ENCODE measurements at regions of chr12 and their contacts with region 1.

Region 1: DNA sequence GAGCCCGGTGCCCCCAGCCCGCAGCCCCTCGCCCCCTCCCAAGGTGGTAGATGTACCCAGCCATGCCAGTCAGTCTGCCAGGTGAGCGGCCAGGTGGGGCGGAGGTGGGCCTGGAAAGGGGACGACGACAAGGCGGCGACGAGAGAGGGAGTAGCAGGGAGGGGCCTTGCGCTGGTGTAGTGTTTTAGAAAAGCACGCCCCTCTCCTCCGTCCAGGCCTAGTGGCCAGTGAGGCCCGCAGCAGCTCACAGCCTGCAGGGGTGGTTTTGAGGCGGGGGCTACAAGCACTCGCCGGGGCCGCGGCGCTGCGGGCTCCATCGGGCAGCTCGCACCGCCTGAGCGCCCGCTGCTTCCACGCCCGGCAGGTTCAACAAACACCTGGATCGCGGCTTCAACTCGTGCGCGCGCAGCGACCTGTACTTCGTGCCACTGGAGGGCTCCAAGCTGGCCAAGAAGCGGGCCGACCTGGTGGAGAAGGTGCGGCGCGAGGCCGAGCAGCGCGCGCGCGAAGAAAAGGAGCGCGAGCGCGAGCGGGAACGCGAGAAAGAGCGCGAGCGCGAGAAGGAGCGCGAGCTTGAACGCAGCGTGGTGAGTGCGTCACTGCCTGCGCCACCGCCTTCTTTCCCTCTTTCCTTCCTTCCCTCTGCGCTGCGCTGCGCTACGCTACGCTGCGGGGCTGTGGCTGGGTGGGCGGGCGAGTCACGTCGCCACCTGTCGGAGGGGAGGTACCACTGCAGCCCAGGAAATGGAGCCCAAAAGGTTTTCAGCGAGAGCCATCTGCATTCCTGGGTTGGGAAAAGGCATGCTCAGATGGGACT is 5.9 kb upstream of the RNU7-1 start:
- DNase-seq: peak; percentile 98

Region 2: GRCh38 chr12:6489449-6489848 is 448.2 kb before region 1 on chr12:
- intact Hi-C with region 1: loop called in 1 of 2 experiments (anchors 5 kb)
- DNase-seq: no peak

Region 3: GRCh38 chr12:6867413-6868210 is 70.1 kb before region 1 on chr12 and contains the start of gene TPI1:
- intact Hi-C with region 1: loop called in 1 of 2 experiments (anchors 2 kb)
- DNase-seq: peak; percentile 95
- total RNA-seq, gene TPI1: 303 to 366 TPM

Measured in posterior vena cava (tissue), 2 donors.